ENCODE measurements at regions of chr7 and their contacts with region 1.

Region 1: GRCh38 chr7:51198654-51199053 is 118.0 kb downstream of the COBL start:
- DNase-seq: no peak
- ATAC-seq: no peak
- H3K4me3 ChIP-seq: no peak overlapping the region
- H3K4me3 Mint-ChIP-seq: no peak overlapping the region
- H3K27ac ChIP-seq: no peak overlapping the region
- H3K27ac Mint-ChIP-seq: no peak overlapping the region
- H3K4me1 ChIP-seq: no peaks in the 10 kb centered on the region
- H3K4me1 Mint-ChIP-seq: no peaks in the 10 kb centered on the region
- H3K27me3 ChIP-seq: peaks cover 0 to 5% of the 10 kb centered on the region in 2 experiments
- H3K27me3 Mint-ChIP-seq: peaks cover 27 to 41% of the 10 kb centered on the region in 2 donors

Region 2: GRCh38 chr7:51209426-51209825 is 10.8 kb after region 1 on chr7:
- CTCF ChIA-PET with region 1: no interaction called
- POLR2A ChIA-PET with region 1: interaction called in 1 of 2 experiments, 13 read pairs
- DNase-seq: no peak
- ATAC-seq: no peak
- H3K4me3 ChIP-seq: no peak overlapping the region
- H3K4me3 Mint-ChIP-seq: no peak overlapping the region
- H3K27ac ChIP-seq: no peak overlapping the region
- H3K27ac Mint-ChIP-seq: no peak overlapping the region
- H3K4me1 ChIP-seq: no peaks in the 10 kb centered on the region
- H3K4me1 Mint-ChIP-seq: no peaks in the 10 kb centered on the region
- H3K27me3 ChIP-seq: no peaks in the 10 kb centered on the region
- H3K27me3 Mint-ChIP-seq: peaks cover 0 to 4% of the 10 kb centered on the region in 2 donors

Region 3: DNA sequence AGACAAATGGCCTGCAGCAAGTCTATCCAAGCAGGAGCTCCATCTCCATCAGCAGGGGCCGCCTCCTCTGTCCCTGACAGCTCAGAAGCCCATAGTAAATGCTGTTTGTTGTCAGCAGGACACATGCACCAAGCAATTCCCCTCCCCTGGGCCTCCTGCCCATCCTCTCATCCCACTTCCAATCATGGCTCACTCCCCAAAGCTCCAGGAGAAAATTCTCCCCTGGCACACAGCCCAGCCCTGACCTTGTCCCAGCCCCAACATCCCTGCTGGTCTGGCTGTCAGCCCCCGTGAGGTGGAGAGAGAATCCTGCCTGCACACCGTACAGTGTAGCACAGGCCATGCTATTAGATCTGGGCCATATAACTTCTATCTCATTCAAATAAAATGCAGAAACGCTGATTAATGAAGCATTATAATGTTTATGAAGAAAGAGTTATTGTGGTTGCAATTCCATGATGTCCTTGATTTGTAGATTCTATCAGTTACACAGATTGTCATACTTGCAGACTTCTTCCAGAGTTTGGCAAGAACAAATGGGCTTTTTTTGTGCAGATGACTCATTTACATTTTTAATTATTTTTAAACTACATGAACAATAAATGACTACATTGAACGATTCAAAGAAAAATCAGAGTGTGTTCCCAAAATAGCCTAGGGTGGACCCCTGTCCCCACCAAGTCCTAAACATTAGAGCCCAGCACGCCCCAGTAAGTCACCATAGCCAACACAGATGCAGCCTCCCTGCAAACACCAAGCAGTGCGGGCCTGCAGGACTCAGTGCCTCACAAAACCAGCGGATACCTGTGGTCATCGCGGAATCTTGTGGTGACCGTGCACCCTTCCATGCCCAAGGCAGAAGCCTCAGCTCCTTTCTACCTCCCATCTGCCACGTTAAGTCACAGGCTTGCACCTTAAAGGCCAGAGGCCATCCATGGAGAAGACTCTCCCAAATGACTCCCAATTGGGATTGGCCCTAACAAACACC is 47.9 kb after region 1 on chr7:
- CTCF ChIA-PET with region 1: no interaction called
- POLR2A ChIA-PET with region 1: no interaction called
- DNase-seq: no peak
- ATAC-seq: no peak
- H3K4me3 ChIP-seq: no peak overlapping the region
- H3K4me3 Mint-ChIP-seq: no peak overlapping the region
- H3K27ac ChIP-seq: no peak overlapping the region
- H3K27ac Mint-ChIP-seq: no peak overlapping the region
- H3K4me1 ChIP-seq: no peaks in the 10 kb centered on the region
- H3K4me1 Mint-ChIP-seq: no peaks in the 10 kb centered on the region
- H3K27me3 ChIP-seq: peaks cover 0 to 11% of the 10 kb centered on the region in 2 experiments
- H3K27me3 Mint-ChIP-seq: peaks cover 0 to 10% of the 10 kb centered on the region in 2 donors

Measured in T-cell (primary cell).